ENCODE measurements at regions of chr7 and their contacts with region 1.

Region 1: GRCh38 chr7:12638851-12639467 is 48.5 kb upstream of the ARL4A start:
- DNase-seq: peak; percentile 43
- ATAC-seq: no peak
- H3K4me3 ChIP-seq: no peak overlapping the region
- H3K27ac ChIP-seq: no peak overlapping the region
- H3K4me1 ChIP-seq: peaks cover 56% of the 10 kb centered on the region
- H3K27me3 ChIP-seq: no peaks in the 10 kb centered on the region
- CTCF ChIP-seq: peak; percentile 63
- EP300 ChIP-seq: no peak
- POLR2A ChIP-seq: no peak
- RAD21 ChIP-seq: peak; percentile 21; the same call in 1 of the 2 replicates

Region 2: GRCh38 chr7:12524794-12525386 is 114.1 kb before region 1 on chr7:
- CTCF ChIA-PET with region 1: no interaction called
- POLR2A ChIA-PET with region 1: no interaction called
- in situ Hi-C with region 1: no loop called
- intact Hi-C with region 1: loop called (anchors 2 kb)
- DNase-seq: peak; percentile 33
- ATAC-seq: no peak
- H3K4me3 ChIP-seq: no peak overlapping the region
- H3K27ac ChIP-seq: no peak overlapping the region
- H3K4me1 ChIP-seq: no peaks in the 10 kb centered on the region
- H3K27me3 ChIP-seq: no peaks in the 10 kb centered on the region
- CTCF ChIP-seq: peak; percentile 62
- EP300 ChIP-seq: no peak
- POLR2A ChIP-seq: no peak
- RAD21 ChIP-seq: no peak

Region 3: DNA sequence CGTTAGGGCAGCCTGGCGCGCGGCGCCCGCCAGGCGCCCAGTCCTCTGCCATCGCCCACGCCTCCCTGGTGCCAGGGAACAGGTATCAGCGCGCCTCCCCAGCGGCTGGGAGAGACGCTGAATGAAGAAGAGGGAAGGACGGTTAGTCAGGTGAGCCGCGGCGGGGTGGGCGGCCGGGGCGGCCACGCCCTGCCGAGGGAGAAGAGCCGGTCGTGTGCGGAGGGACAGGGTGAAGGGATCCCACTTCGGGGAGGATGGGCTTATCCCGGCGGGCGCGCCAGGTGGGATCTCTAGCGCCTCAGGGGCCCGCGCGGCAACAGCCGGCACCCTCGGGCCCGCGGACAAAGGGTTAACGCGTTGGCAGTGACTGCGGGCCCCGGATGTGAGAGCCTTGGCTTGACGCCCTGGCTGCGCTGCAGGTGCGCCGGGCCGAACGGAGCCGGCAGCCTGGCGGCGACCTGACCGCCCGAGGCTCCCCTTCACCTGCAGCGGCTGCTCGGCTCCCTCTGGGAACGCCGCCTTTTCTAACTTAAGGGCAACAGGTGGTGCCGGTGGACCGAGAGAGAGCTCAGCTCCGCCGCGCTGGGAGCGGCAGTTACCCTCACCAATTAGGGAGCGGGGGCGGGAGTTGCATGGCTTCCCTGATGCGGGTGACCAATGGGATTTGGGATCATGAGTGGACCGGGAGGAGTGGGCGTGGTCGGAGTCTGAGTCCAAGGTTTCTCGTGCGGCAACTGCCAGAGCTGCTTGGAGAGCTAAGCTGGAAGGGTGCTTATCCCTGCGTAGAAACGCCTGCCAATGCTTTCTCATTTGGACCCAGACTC is 48.1 kb after region 1 on chr7 and contains the start of gene ARL4A:
- CTCF ChIA-PET with region 1: interaction called, 8 read pairs
- POLR2A ChIA-PET with region 1: interaction called, 14 read pairs
- in situ Hi-C with region 1: loop called (anchors 5 kb)
- intact Hi-C with region 1: loop called (anchors 1 kb)
- DNase-seq: peak; percentile 98
- ATAC-seq: peak; percentile 96
- H3K4me3 ChIP-seq: peak within 1 kb of the TSS; percentile 86 to 95 (median 92)
- H3K27ac ChIP-seq: peak within 1 kb of the TSS; percentile 92
- H3K4me1 ChIP-seq: peaks cover 42% of the 10 kb centered on the region
- H3K27me3 ChIP-seq: no peaks in the 10 kb centered on the region
- CTCF ChIP-seq: peak; percentile 91
- EP300 ChIP-seq: no peak; a peak in 1 of 4 replicates
- POLR2A ChIP-seq: peak; percentile 97 to 98
- RAD21 ChIP-seq: peak; percentile 79
- total RNA-seq, gene ARL4A: 25.6 and 29.3 TPM in 2 replicates

Region 4: GRCh38 chr7:12741951-12742575 is 103.1 kb after region 1 on chr7:
- CTCF ChIA-PET with region 1: no interaction called
- POLR2A ChIA-PET with region 1: no interaction called
- in situ Hi-C with region 1: no loop called
- intact Hi-C with region 1: no loop called
- DNase-seq: no peak
- ATAC-seq: no peak
- H3K4me3 ChIP-seq: no peak overlapping the region
- H3K27ac ChIP-seq: no peak overlapping the region
- H3K4me1 ChIP-seq: no peaks in the 10 kb centered on the region
- H3K27me3 ChIP-seq: no peaks in the 10 kb centered on the region
- CTCF ChIP-seq: no peak
- EP300 ChIP-seq: no peak
- POLR2A ChIP-seq: no peak
- RAD21 ChIP-seq: no peak

Region 5: GRCh38 chr7:12821746-12822145 is 182.8 kb after region 1 on chr7:
- CTCF ChIA-PET with region 1: no interaction called
- POLR2A ChIA-PET with region 1: no interaction called
- in situ Hi-C with region 1: no loop called
- intact Hi-C with region 1: loop called (anchors 5 kb)
- DNase-seq: peak; percentile 44
- ATAC-seq: peak; percentile 76
- H3K4me3 ChIP-seq: no peak overlapping the region
- H3K27ac ChIP-seq: no peak overlapping the region
- H3K4me1 ChIP-seq: peaks cover 9% of the 10 kb centered on the region
- H3K27me3 ChIP-seq: no peaks in the 10 kb centered on the region
- CTCF ChIP-seq: no peak
- EP300 ChIP-seq: no peak
- POLR2A ChIP-seq: no peak
- RAD21 ChIP-seq: no peak

Region 6: DNA sequence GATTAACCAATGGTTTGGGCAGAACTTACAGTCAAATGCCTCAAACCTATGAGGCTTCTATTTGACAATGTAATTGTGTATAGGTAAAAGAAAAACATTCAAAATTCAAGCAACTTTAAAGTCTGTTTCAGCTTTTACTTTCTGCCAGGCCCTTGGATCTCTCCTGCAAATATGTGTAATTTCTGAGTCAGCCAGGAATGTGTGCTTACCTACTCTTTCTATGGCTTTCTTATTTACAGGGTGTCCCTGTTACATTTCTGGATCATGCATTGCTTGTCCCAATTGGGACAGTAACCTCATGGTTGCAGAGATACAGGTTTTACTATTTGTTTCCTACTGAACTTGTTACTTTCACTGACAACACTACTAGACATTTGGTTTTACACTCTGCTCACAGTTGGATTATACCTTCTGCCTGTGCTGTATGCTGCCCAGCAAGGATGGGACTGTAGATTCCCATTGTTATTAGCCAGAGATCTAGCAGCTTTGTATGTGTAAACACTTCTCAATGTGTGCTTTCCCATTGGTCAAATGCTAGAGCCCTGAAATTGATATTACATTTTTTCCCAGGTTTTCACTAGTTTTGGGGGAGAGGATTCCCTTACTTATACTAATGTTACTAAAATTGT is 403.8 kb after region 1 on chr7:
- CTCF ChIA-PET with region 1: no interaction called
- POLR2A ChIA-PET with region 1: no interaction called
- in situ Hi-C with region 1: no loop called
- intact Hi-C with region 1: loop called (anchors 1 kb)
- DNase-seq: peak; percentile 74
- ATAC-seq: peak; percentile 83
- H3K4me3 ChIP-seq: no peak overlapping the region
- H3K27ac ChIP-seq: no peak overlapping the region
- H3K4me1 ChIP-seq: peaks cover 19% of the 10 kb centered on the region
- H3K27me3 ChIP-seq: no peaks in the 10 kb centered on the region
- CTCF ChIP-seq: no peak
- EP300 ChIP-seq: 0 out of 4 replicates have a peak, but pooled peaks of 1 of the 2 experiments have one; percentile 17
- POLR2A ChIP-seq: no peak
- RAD21 ChIP-seq: no peak

Region 7: GRCh38 chr7:13185139-13185538 is 546.2 kb after region 1 on chr7:
- CTCF ChIA-PET with region 1: no interaction called
- POLR2A ChIA-PET with region 1: interaction called, 3 read pairs
- in situ Hi-C with region 1: no loop called
- intact Hi-C with region 1: loop called (anchors 1 kb)
- DNase-seq: peak; percentile 95
- ATAC-seq: peak; percentile 99
- H3K4me3 ChIP-seq: no peak overlapping the region; a peak in 1 of 6 replicates
- H3K27ac ChIP-seq: peak overlapping the region; percentile 62
- H3K4me1 ChIP-seq: peaks cover 32% of the 10 kb centered on the region
- H3K27me3 ChIP-seq: no peaks in the 10 kb centered on the region
- CTCF ChIP-seq: peak; percentile 20; the same call in 1 of the 2 replicates
- EP300 ChIP-seq: peak in 1 of 2 experiments; percentile 97; a peak in 2 of 4 replicates
- POLR2A ChIP-seq: no peak
- RAD21 ChIP-seq: no peak